HepG2 (cell line): ENCODE measurements at regions of chr6 and their contacts with region 1.

Region 1: DNA sequence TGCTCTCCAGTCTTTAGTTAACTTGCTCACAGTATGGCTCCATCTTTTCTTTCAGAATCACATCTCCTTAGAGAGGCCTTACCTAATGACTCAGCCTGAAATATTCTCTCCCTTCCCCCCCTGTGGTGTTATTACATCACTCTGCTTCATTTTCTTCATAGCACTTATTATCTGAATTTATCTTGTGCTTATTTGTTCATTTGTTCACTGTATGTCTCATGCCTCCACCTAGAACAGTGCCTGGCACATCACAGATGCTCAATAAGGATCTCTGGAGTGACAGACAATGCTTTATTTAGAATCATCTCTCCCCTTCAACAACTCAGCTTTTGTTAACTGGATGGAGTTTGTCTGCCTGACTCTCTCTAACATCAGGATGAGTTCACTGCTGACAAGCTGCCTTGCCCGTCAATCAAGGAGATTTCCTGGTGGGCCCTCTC is 96.6 kb upstream of the MAN1A1 start:
- DNase-seq: no peak
- ATAC-seq: no peak
- H3K4me3 ChIP-seq: no peak overlapping the region
- H3K27ac ChIP-seq: no peak overlapping the region
- H3K4me1 ChIP-seq: no peaks in the 10 kb centered on the region
- H3K27me3 ChIP-seq: peaks cover 0 to 2% of the 10 kb centered on the region in 2 experiments; a peak in 1 of 5 replicates
- CTCF ChIP-seq: no peak
- EP300 ChIP-seq: no peak
- POLR2A ChIP-seq: no peak
- RAD21 ChIP-seq: no peak

Region 2: GRCh38 chr6:119201480-119201879 is 244.7 kb before region 1 on chr6:
- CTCF ChIA-PET with region 1: no interaction called
- POLR2A ChIA-PET with region 1: no interaction called
- in situ Hi-C with region 1: no loop called
- intact Hi-C with region 1: no loop called
- DNase-seq: no peak
- ATAC-seq: no peak
- H3K4me3 ChIP-seq: no peak overlapping the region
- H3K27ac ChIP-seq: no peak overlapping the region
- H3K4me1 ChIP-seq: no peaks in the 10 kb centered on the region
- H3K27me3 ChIP-seq: no peaks in the 10 kb centered on the region
- CTCF ChIP-seq: no peak
- EP300 ChIP-seq: no peak
- POLR2A ChIP-seq: no peak
- RAD21 ChIP-seq: no peak

Region 3: GRCh38 chr6:119768201-119768600 is 322.1 kb after region 1 on chr6:
- CTCF ChIA-PET with region 1: no interaction called
- POLR2A ChIA-PET with region 1: no interaction called
- in situ Hi-C with region 1: no loop called
- intact Hi-C with region 1: no loop called
- DNase-seq: no peak
- ATAC-seq: no peak
- H3K4me3 ChIP-seq: no peak overlapping the region
- H3K27ac ChIP-seq: no peak overlapping the region
- H3K4me1 ChIP-seq: no peaks in the 10 kb centered on the region
- H3K27me3 ChIP-seq: no peaks in the 10 kb centered on the region; a peak in 1 of 5 replicates
- CTCF ChIP-seq: no peak
- EP300 ChIP-seq: no peak
- POLR2A ChIP-seq: no peak
- RAD21 ChIP-seq: no peak

Region 4: DNA sequence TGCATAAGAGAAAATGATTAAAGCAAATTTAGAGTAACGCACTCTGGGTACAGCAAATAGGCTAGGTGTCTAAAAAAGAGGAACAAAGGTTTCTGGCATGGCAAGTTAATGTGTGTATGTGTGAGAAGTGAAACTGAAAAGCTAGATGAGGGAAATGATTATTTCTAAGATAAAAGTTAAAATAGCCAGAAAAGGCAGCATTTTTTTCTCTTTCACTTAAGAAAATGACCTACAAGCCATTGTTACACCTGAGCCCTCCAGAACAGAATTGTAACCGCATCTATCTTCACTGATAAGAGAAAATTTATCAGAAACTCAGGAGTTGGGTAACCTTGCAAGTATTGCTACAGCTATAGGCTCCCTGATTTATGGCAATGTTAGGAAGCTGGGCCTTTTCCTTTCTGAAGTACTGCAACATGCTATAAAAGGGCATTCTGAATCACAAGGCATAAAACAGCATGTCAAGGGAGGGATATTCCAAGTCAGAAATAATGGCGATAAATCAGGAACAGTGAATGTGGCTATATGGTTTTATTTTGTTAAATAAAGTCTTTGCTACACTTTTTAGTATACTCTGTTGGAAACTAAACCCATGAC is 1492.8 kb after region 1 on chr6:
- CTCF ChIA-PET with region 1: no interaction called
- POLR2A ChIA-PET with region 1: no interaction called
- in situ Hi-C with region 1: no loop called
- intact Hi-C with region 1: loop called (anchors 5 kb)
- DNase-seq: no peak
- ATAC-seq: no peak
- H3K4me3 ChIP-seq: no peak overlapping the region
- H3K27ac ChIP-seq: no peak overlapping the region
- H3K4me1 ChIP-seq: no peaks in the 10 kb centered on the region
- H3K27me3 ChIP-seq: no peaks in the 10 kb centered on the region
- CTCF ChIP-seq: no peak
- EP300 ChIP-seq: no peak
- POLR2A ChIP-seq: no peak
- RAD21 ChIP-seq: no peak